Posterior cingulate gyrus (tissue), 11 donors: ENCODE measurements at regions of chrX and their contacts with region 1.

Region 1: DNA sequence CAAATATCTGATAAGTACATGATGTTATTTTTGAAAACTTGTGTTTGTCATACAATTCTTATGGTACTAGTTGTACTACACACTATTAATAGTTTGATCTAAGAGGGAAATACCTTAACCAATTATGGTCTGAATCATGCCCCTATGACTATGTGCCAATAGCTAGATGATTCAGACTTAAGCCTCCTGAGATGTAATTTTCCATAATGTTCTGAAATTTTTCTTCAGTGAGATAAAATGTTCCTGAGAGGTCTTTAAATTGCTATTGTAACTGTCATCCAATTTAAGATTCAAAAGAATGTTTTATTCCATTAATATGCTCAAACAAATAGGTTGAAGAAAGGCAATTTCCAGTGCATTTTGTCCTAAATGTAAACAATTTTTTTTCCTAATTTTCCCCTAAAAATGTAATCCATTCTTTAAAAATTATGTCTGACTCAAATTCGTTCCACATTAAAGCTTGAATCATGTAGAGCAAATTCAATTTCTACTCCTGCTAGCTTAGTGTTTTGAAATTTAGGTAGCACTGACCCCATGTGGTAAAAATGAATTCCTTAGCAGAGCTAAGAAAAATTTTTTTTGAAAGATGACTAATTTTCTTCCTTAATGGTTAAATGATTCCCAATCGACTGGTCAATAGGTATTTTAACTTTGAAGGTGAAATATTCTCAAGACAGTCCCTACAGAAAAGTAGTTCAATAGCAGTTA is 49.1 kb downstream of the APOOL start:
- DNase-seq: no peak

Region 2: GRCh38 chrX:84729809-84730208 is 323.0 kb before region 1 on chrX:
- intact Hi-C with region 1: loop called (anchors 10 kb)
- DNase-seq: peak in 1 of 10 donors; percentile 17